ENCODE measurements at regions of chr11 and their contacts with region 1.

Region 1: DNA sequence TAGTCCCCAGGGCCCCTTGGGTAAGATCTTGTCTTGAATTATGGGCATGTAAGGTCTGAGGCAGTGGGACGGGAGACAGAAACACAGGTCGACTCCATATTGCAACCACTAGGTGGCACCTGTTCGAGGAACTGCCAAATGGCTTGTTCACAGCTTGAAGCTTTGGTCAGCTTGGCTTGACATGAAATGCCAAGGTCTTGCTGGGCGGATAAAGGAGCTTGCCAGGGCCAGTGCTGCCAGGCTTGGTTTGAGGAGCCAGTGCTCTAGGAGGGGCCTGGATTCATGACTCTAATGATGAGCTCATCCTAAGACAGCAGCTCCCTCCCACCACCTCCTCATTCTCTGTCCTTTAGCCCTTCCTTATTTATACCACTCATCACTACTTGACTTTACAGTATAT is 11.9 kb upstream of the NRIP3 start:
- DNase-seq: peak; percentile 81
- H3K4me3 ChIP-seq: no peak overlapping the region
- H3K27ac ChIP-seq: no peak overlapping the region
- H3K4me1 ChIP-seq: peaks cover 13% of the 10 kb centered on the region
- H3K27me3 ChIP-seq: peaks cover 0 to 6% of the 10 kb centered on the region in 2 experiments
- CTCF ChIP-seq: peak; percentile 80 to 85
- POLR2A ChIP-seq: no peak

Region 2: GRCh38 chr11:9028581-9028980 is 12.9 kb after region 1 on chr11:
- CTCF ChIA-PET with region 1: interaction called, 29 read pairs
- POLR2A ChIA-PET with region 1: no interaction called
- dilution Hi-C with region 1: no loop called
- intact Hi-C with region 1: no loop called
- DNase-seq: no peak
- H3K4me3 ChIP-seq: no peak overlapping the region
- H3K27ac ChIP-seq: no peak overlapping the region
- H3K4me1 ChIP-seq: no peaks in the 10 kb centered on the region
- H3K27me3 ChIP-seq: peaks cover 1 to 6% of the 10 kb centered on the region in 2 experiments
- CTCF ChIP-seq: no peak
- POLR2A ChIP-seq: no peak

Region 3: DNA sequence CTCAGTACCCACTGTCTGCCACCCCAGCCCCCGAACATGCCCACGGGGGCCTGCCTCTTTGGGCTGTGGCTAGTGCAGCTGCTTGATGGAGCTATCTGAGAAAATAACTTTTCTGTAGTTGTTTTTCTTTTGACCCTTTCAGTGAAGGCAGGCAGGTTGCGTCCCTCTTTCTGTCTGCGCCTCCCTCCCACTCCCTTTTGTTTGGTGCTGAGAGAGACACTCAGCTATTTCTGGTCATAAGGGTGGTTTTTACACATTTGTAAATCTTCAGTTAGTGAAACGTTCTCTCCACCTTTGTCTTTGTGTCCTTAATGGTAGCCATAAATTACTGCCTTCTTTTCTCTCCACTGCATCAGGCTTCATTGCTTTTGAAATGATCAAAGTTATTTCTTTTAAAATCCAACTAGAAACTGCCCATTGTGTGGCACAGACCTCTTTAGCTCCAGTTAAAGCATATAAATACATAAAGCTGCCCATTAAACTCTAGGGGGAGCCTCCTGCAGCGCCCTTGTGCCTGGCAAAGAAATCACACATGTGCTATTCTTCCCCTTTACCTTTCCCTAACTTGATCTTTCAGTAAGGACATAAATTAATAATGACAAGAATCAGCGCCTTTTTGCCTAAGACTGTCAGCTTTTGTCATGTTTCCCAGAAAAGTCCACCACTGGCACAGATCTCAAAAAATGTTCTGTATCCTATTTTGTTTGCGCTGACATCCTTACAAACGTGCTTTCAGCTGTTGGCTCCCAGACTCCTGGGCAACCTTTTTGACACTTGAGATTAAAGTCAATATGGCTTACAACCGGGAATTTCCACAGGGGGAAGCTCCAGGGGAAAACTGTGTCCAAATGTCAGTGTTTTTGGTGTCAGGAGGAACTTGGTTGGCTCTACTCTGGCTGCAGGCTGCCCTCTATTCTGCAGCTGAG is 77.4 kb after region 1 on chr11:
- CTCF ChIA-PET with region 1: interaction called, 11 read pairs
- POLR2A ChIA-PET with region 1: no interaction called
- dilution Hi-C with region 1: no loop called
- intact Hi-C with region 1: no loop called
- DNase-seq: peak; percentile 24
- H3K4me3 ChIP-seq: no peak overlapping the region
- H3K27ac ChIP-seq: no peak overlapping the region
- H3K4me1 ChIP-seq: no peaks in the 10 kb centered on the region
- H3K27me3 ChIP-seq: peaks cover 4 to 12% of the 10 kb centered on the region in 2 experiments
- CTCF ChIP-seq: peak in 1 of 2 donors; percentile 35
- POLR2A ChIP-seq: no peak

Region 4: GRCh38 chr11:9130297-9130696 is 114.6 kb after region 1 on chr11:
- CTCF ChIA-PET with region 1: interaction called, 17 read pairs
- POLR2A ChIA-PET with region 1: no interaction called
- dilution Hi-C with region 1: no loop called
- intact Hi-C with region 1: no loop called
- DNase-seq: no peak
- H3K4me3 ChIP-seq: no peak overlapping the region
- H3K27ac ChIP-seq: no peak overlapping the region
- H3K4me1 ChIP-seq: no peaks in the 10 kb centered on the region
- H3K27me3 ChIP-seq: no peaks in the 10 kb centered on the region
- CTCF ChIP-seq: no peak
- POLR2A ChIP-seq: no peak

Region 5: DNA sequence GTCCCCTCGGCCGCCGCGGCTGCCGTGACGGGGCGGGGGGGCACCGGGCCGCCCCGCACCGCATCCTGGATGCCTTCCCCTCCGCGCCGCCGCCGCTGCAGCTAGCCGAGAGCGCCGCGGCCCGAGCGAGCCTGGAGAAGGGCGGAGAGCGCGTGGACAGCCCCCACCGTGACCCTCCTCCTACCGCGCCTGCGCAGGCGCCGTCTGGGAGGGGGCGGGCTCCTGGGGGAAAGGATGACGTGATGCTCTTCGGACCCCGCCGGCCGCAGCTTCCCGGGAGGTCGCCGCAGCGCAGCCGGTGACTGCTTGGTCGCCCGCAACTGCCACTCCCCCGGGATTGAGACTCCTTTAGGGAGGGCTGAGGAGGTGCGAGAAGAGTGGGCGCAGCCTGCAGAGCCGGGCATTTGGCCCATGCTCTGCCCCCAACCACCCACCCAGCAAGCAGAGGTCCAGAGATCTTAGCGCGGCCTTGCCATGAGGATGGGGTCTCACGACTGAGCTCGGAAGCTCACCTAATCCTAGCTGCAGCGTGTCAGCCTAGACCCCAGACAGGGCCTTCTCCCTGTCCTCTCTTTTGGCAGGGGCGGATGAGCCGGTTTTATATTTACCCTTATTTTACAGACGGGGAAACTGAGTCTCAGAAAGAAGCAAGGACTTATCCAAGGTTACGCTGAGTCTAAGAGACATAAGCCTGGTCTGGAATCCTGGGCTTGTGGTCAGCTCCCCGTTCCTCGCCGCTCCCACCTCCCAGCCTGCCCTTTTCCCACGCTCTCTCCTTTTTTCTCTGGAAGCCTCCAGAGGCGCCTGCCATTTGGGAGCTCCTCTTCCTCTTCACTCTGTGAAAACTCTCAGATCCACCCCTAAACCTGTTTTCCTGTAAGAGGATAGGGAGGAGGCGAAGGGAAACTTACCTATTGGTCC is 249.8 kb after region 1 on chr11 and contains the start of gene DENND5A:
- CTCF ChIA-PET with region 1: interaction called, 3 read pairs
- POLR2A ChIA-PET with region 1: no interaction called
- dilution Hi-C with region 1: no loop called
- intact Hi-C with region 1: loop called (anchors 5 kb)
- DNase-seq: peak; percentile 90
- H3K4me3 ChIP-seq: peak within 1 kb of the TSS; percentile 71 to 83 (median 81)
- H3K27ac ChIP-seq: peak within 1 kb of the TSS; percentile 81
- H3K4me1 ChIP-seq: peaks cover 13% of the 10 kb centered on the region
- H3K27me3 ChIP-seq: no peaks in the 10 kb centered on the region
- CTCF ChIP-seq: no peak
- POLR2A ChIP-seq: peak; percentile 88
- total RNA-seq, gene DENND5A: 116 and 117 TPM in 2 replicates

Region 6: GRCh38 chr11:9716275-9717039 is 700.8 kb after region 1 on chr11:
- CTCF ChIA-PET with region 1: no interaction called
- POLR2A ChIA-PET with region 1: no interaction called
- dilution Hi-C with region 1: no loop called
- intact Hi-C with region 1: no loop called
- DNase-seq: peak; percentile 97
- H3K4me3 ChIP-seq: no peak overlapping the region
- H3K27ac ChIP-seq: peak overlapping the region; percentile 94
- H3K4me1 ChIP-seq: peaks cover 64% of the 10 kb centered on the region
- H3K27me3 ChIP-seq: no peaks in the 10 kb centered on the region
- CTCF ChIP-seq: no peak
- POLR2A ChIP-seq: no peak

Region 7: GRCh38 chr11:10322830-10323792 is 1307.4 kb after region 1 on chr11:
- CTCF ChIA-PET with region 1: no interaction called
- POLR2A ChIA-PET with region 1: no interaction called
- dilution Hi-C with region 1: no loop called
- intact Hi-C with region 1: loop called (anchors 10 kb)
- DNase-seq: peak; percentile 92
- H3K4me3 ChIP-seq: no peak overlapping the region
- H3K27ac ChIP-seq: peak overlapping the region; percentile 28
- H3K4me1 ChIP-seq: peaks cover 57% of the 10 kb centered on the region
- H3K27me3 ChIP-seq: no peaks in the 10 kb centered on the region
- CTCF ChIP-seq: peak; percentile 28 to 46
- POLR2A ChIP-seq: no peak

Measured in endothelial cell of umbilical vein (primary cell).